ENCODE measurements at regions of chr12 and their contacts with region 1.

Region 1: GRCh38 chr12:68815232-68815927 is 7.4 kb downstream of the MDM2 start:
- DNase-seq: no peak
- ATAC-seq: no peak
- H3K4me3 Mint-ChIP-seq: no peak overlapping the region
- H3K27ac Mint-ChIP-seq: no peak overlapping the region
- H3K4me1 Mint-ChIP-seq: peaks cover 39% of the 10 kb centered on the region
- H3K27me3 Mint-ChIP-seq: no peaks in the 10 kb centered on the region
- CTCF ChIP-seq: no peak

Region 2: DNA sequence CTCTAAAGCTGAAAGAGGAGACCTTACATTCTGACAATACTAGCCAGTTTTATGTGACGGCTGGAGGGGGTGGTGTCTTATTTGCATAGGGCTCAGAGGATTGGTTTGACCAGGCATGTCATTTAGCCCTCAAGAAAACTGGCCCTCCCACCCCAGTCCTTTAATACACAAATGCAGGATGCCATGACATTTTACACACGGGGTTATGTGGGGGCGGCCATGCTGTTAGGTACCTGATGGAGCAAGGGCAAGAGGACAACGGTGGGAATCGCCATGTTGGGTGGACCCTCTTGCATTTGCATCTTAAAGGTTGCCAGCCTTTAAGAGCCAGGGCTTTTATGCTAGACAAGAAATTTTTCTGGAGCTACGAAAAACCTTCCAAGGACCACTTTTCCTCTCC is 15.9 kb after region 1 on chr12:
- CTCF ChIA-PET with region 1: interaction called, 25 read pairs
- POLR2A ChIA-PET with region 1: interaction called, 7 read pairs
- intact Hi-C with region 1: no loop called
- DNase-seq: no peak
- ATAC-seq: no peak
- H3K4me3 Mint-ChIP-seq: no peak overlapping the region
- H3K27ac Mint-ChIP-seq: no peak overlapping the region
- H3K4me1 Mint-ChIP-seq: peaks cover 18% of the 10 kb centered on the region
- H3K27me3 Mint-ChIP-seq: no peaks in the 10 kb centered on the region
- CTCF ChIP-seq: no peak

Region 3: DNA sequence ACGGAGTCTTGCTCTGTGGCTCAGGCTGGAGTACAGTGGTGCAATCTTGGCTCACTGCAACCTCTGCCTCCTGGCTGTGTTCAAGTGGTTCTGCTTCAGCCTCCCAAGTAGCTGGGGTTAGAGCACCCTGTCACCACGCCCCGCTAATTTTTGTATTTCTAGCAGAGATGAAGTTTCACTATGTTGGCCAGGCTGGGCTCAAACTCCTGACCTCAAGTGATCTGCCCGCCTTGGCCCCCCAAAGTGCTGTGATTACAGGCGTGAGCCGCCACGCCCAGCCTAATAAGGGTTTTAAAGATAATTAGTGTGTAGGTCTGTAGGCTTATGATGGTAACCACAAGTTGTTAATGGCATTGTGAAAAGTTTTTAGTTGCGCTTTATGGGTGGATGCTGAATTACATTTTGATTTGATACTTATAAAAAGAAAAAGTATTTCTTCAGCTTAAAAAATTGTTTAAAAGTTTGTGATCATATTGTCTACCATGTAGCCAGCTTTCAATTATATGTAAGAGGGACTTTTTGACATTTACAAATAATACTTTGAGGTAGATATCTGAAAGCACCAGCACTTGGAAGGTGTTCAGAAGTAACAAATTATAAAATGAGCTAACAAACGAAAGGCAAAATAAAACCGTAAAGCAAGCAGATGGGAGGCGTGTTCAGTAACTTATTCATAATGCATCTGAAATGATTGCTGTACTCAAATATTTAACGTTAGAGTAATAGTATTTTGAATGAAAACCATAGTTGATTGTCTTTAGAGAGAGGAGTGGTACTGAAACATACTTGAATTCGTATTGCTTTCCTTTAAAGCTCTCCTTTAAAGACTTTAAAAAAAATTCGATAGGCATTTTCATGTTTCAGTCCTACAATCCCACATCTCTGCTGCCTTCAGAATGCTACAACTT is 29.7 kb after region 1 on chr12:
- CTCF ChIA-PET with region 1: no interaction called
- POLR2A ChIA-PET with region 1: no interaction called
- intact Hi-C with region 1: no loop called
- DNase-seq: no peak
- ATAC-seq: no peak
- H3K4me3 Mint-ChIP-seq: no peak overlapping the region
- H3K27ac Mint-ChIP-seq: no peak overlapping the region
- H3K4me1 Mint-ChIP-seq: no peaks in the 10 kb centered on the region
- H3K27me3 Mint-ChIP-seq: no peaks in the 10 kb centered on the region
- CTCF ChIP-seq: no peak